Spleen (tissue), 13 donors: ENCODE measurements at regions of chr9 and their contacts with region 1.

Region 1: DNA sequence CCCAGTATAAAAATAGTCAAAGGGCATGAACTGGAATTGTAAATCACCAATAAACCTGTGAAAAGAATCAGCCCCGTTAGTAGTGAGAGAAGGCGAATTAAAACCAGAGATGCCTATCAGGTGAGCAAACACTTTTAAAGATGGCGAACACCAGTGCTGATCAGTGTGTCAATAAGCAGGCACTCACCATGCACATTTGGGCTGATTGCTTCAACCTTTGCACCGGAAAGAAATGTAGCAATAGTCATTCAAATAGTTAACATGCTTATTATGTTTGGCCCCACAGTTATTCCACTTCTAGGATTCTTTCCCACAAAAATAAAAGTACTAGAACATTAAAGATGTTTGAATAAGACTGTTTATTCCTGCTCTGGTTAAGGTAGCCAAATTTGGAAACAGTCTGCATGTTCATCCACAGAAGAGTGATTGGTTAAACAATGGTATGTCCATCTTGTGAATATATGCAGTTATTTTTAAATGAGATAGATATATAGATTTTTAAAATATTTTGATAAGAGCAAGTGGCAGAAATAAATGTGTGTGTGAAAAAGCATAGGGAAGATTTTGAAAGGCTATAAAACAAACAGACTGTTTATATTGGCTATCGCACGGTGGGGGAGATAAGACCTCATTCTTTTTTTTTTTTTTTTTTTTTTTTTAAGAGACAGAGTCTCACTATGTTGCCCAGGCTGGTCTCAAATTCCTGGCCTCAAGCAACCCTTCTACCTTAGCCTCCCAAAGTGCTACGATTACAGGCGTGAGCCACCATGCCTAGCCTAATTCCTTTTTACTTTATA is 112.2 kb downstream of the PIP5K1B start:
- DNase-seq: no peak
- H3K4me3 ChIP-seq: no peak overlapping the region
- H3K27ac ChIP-seq: no peak overlapping the region
- H3K4me1 ChIP-seq: peaks cover 0 to 3% (median 0%) of the 10 kb centered on the region in 6 donors
- H3K27me3 ChIP-seq: no peaks in the 10 kb centered on the region
- CTCF ChIP-seq: no peak
- POLR2A ChIP-seq: no peak

Region 2: DNA sequence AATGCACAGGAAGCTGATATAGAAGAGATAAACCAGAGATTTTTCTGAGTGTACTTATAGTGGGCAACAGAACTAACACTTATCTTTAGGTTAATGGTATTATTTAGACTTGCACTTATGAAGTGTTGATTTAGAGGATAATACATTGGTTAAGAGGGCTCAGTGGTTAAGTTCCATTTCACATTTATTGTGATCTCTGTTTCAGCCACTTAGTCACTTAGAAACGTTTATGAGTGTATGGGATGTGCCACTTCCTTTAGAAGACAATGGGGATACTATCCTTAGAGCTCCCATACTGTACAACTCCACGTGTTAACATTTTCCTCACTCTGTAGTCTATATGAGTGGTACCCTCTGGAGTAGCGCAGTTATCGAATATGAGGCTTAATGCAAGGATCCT is 54.7 kb before region 1 on chr9:
- intact Hi-C with region 1: loop called (anchors 10 kb)
- DNase-seq: no peak
- H3K4me3 ChIP-seq: no peak overlapping the region
- H3K27ac ChIP-seq: no peak overlapping the region
- H3K4me1 ChIP-seq: peaks cover 0 to 15% (median 0%) of the 10 kb centered on the region in 6 donors
- H3K27me3 ChIP-seq: no peaks in the 10 kb centered on the region
- CTCF ChIP-seq: no peak
- POLR2A ChIP-seq: no peak

Region 3: DNA sequence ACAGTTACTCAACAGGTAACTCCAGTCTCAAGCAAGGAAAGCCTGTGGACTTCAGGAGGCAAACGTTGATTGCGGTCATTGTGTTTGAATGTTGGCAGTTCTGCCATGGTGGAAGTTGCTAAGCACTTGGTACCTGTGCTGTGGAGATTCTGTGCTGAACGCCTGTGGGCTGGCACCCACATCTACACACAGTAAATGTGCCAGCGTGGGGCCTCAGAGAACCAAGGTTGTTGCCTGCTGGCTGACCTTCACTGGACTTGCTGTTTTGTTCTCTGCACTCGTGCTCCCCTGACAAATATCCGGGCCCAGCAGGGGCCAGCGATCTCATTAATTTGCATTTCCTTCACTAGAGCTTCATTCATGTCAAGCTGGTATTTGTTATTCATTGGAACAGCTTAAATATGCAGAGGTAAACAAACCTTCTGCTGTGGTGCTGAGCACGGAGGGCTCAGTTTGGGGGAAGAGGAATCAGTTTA is 54.8 kb after region 1 on chr9:
- intact Hi-C with region 1: no loop called
- DNase-seq: peak; percentile 82
- H3K4me3 ChIP-seq: no peak overlapping the region
- H3K27ac ChIP-seq: peak overlapping the region in 6 of 8 donors; percentile 8 to 57 (median 36)
- H3K4me1 ChIP-seq: peaks cover 0 to 5% (median 0%) of the 10 kb centered on the region in 6 donors
- H3K27me3 ChIP-seq: no peaks in the 10 kb centered on the region
- CTCF ChIP-seq: no peak
- POLR2A ChIP-seq: no peak

Region 4: DNA sequence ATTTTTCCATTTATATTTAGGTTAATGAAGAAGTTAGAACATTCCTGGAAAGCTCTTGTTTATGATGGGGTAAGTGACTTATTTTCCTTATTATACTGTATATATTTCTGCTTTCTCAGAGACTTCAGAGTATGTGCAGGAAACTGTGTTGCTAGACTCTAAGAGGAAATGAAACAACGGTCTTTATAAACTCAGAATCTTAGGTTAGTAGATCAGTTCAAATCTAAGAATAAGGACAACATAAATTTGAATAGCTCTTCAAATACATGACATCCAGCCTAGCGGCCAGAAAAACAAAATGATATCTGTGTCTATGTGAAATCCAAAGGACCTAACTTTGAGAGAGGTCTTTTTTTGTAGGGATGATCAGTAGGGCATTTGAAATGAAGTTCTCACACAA is 102.4 kb after region 1 on chr9:
- intact Hi-C with region 1: loop called (anchors 10 kb)
- DNase-seq: no peak
- H3K4me3 ChIP-seq: no peak overlapping the region
- H3K27ac ChIP-seq: peak overlapping the region in 3 of 8 donors; percentile 40 to 63 (median 55)
- H3K4me1 ChIP-seq: peaks cover 0 to 18% (median 7%) of the 10 kb centered on the region in 6 donors
- H3K27me3 ChIP-seq: no peaks in the 10 kb centered on the region
- CTCF ChIP-seq: no peak
- POLR2A ChIP-seq: no peak